Activated CD4-positive, alpha-beta memory T cell treated with anti-CD3 and anti-CD28 coated beads, Interleukin-2, amount 10 ng/mL, durations not matched to agents 7 days and 5 days (primary cell): ENCODE measurements at regions of chr22 and their contacts with region 1.

Region 1: GRCh38 chr22:23591201-23591791 is 11.2 kb upstream of the IGLL1 start:
- DNase-seq: peak; percentile 62
- H3K4me3 Mint-ChIP-seq: no peak overlapping the region
- H3K27ac Mint-ChIP-seq: no peak overlapping the region
- H3K4me1 Mint-ChIP-seq: peaks cover 7% of the 10 kb centered on the region
- H3K27me3 Mint-ChIP-seq: peaks cover 4% of the 10 kb centered on the region

Region 2: DNA sequence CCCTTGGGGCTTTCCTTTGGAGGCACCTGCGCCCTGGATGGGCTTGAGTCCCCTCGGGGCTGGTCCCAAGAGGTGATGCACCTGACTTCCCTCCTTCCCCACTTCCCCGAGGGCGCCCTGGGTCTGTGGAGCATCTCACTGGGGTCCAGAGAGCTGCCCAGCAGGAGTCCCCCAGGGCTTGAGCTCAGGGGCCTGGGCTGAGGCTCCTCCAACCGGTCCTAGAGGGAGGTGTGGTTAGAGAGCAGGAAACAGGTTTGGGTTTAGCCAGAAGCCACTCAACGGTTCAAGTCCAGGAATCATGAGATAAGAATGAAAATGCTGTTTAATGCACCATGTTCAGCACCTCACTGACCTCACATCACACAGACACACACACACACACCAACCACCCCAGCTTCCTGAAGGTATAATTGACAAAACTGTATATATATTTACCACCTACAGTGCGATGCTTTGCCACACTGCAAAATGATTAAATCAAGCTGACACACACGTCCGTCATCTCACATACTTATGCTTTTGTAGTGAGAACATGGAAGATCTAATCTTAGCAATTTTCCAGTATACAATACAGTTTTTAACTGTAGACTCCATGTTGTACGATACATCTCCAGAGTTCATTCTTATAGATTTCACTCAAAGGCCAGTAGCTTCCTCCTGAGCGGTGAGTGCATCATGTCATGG is 10.6 kb before region 1 on chr22:
- CTCF ChIA-PET with region 1: interaction called, 16 read pairs
- POLR2A ChIA-PET with region 1: interaction called, 3 read pairs
- DNase-seq: peak; percentile 40
- H3K4me3 Mint-ChIP-seq: peak overlapping the region; percentile 27
- H3K27ac Mint-ChIP-seq: peak overlapping the region; percentile 51
- H3K4me1 Mint-ChIP-seq: peaks cover 16% of the 10 kb centered on the region
- H3K27me3 Mint-ChIP-seq: peaks cover 23% of the 10 kb centered on the region

Region 3: DNA sequence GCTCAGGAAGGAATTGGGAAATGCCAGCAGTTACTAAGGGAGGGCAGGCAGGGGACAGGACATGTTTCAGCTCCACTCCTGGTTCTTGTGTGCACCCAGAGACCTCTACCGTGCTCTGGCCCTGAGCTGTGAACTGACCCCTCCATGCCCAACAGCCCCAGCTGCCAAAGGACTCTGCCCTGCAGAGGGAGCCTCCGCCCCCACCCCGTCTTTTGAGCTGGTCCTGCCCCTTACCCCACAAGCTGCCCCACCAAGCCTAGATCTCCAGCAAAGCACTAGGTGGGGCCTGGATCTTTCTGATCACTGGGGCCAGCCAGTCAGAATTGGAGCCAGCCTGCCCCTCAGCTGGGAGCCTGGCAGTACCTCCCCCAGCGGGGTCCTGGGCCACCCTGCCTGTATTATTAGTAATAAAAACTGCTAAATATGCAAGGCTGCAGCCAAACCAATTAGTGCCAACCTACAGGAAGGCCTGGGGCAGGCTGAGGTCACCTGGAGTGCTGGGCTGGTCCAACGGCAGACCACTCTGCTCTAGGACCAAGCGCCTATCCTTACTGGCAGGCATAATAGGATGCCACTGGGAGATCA is 64.7 kb after region 1 on chr22:
- CTCF ChIA-PET with region 1: no interaction called
- POLR2A ChIA-PET with region 1: no interaction called
- DNase-seq: no peak
- H3K4me3 Mint-ChIP-seq: no peak overlapping the region
- H3K27ac Mint-ChIP-seq: no peak overlapping the region
- H3K4me1 Mint-ChIP-seq: no peaks in the 10 kb centered on the region
- H3K27me3 Mint-ChIP-seq: no peaks in the 10 kb centered on the region

Region 4: GRCh38 chr22:23803001-23803819 is 211.9 kb after region 1 on chr22:
- CTCF ChIA-PET with region 1: no interaction called
- POLR2A ChIA-PET with region 1: no interaction called
- DNase-seq: no peak
- H3K4me3 Mint-ChIP-seq: no peak overlapping the region
- H3K27ac Mint-ChIP-seq: no peak overlapping the region
- H3K4me1 Mint-ChIP-seq: no peaks in the 10 kb centered on the region
- H3K27me3 Mint-ChIP-seq: no peaks in the 10 kb centered on the region